ENCODE measurements at regions of chr15 and their contacts with region 1.

Region 1: DNA sequence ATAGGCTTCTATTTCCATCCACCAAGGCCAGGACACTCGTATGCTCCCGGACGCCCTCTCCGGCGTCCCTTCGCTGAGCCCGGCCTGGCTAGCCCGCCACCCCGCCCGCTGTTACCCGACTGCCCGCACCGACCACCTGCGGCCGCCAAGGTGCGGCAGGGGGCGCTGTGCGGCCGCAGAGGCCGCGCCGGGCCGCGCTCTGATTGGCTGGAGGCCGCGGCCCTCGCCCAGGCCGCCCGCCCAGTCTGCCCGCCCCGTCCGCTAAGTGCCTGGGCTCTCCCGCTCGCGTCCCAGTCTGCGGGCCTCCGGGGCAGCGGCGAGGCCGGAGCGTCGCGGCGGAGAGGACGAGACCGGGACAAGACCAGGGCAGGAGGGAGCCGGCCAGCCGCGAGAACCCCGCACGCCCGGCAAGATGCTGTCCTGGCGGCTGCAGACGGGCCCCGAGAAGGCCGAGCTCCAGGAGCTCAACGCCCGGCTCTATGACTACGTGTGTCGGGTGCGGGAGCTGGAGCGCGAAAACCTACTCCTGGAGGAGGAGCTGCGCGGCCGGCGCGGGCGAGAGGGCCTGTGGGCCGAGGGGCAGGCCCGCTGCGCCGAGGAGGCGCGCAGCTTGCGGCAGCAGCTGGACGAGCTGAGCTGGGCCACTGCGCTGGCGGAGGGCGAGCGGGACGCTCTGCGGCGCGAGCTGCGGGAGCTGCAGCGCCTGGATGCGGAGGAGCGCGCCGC is at the start of gene SYNM:
- DNase-seq: peak; percentile 12 to 52
- ATAC-seq: peak; percentile 36 to 69 (median 63)
- H3K4me3 ChIP-seq: no peak within 1 kb of the TSS
- H3K4me3 Mint-ChIP-seq: peak within 1 kb of the TSS; percentile 60
- H3K27ac ChIP-seq: no peak within 1 kb of the TSS
- H3K27ac Mint-ChIP-seq: no peak within 1 kb of the TSS
- H3K4me1 ChIP-seq: peaks cover 15% of the 10 kb centered on the region
- H3K4me1 Mint-ChIP-seq: peaks cover 0 to 10% of the 10 kb centered on the region in 2 donors
- H3K27me3 ChIP-seq: peaks cover 12% of the 10 kb centered on the region
- H3K27me3 Mint-ChIP-seq: peaks cover 32 to 36% of the 10 kb centered on the region in 2 donors
- CTCF ChIP-seq: no peak
- total RNA-seq, gene SYNM: 0.11 to 0.48 (median 0.42) TPM

Region 2: GRCh38 chr15:99213187-99213811 is 108.3 kb after region 1 on chr15:
- intact Hi-C with region 1: loop called (anchors 5 kb)
- DNase-seq: peak; percentile 29 to 66
- ATAC-seq: peak; percentile 60 to 79 (median 67)
- H3K4me3 ChIP-seq: no peak overlapping the region
- H3K4me3 Mint-ChIP-seq: no peak overlapping the region
- H3K27ac ChIP-seq: no peak overlapping the region
- H3K27ac Mint-ChIP-seq: no peak overlapping the region
- H3K4me1 ChIP-seq: no peaks in the 10 kb centered on the region
- H3K4me1 Mint-ChIP-seq: no peaks in the 10 kb centered on the region
- H3K27me3 ChIP-seq: no peaks in the 10 kb centered on the region
- H3K27me3 Mint-ChIP-seq: peaks cover 12 to 26% of the 10 kb centered on the region in 2 donors
- CTCF ChIP-seq: peak; percentile 76

Region 3: GRCh38 chr15:99385865-99386264 is 280.9 kb after region 1 on chr15:
- intact Hi-C with region 1: no loop called
- DNase-seq: no peak
- ATAC-seq: no peak
- H3K4me3 ChIP-seq: no peak overlapping the region
- H3K4me3 Mint-ChIP-seq: no peak overlapping the region
- H3K27ac ChIP-seq: no peak overlapping the region
- H3K27ac Mint-ChIP-seq: no peak overlapping the region
- H3K4me1 ChIP-seq: peaks cover 2% of the 10 kb centered on the region
- H3K4me1 Mint-ChIP-seq: no peaks in the 10 kb centered on the region
- H3K27me3 ChIP-seq: no peaks in the 10 kb centered on the region
- H3K27me3 Mint-ChIP-seq: no peaks in the 10 kb centered on the region
- CTCF ChIP-seq: no peak

Measured in natural killer cell (primary cell).